ENCODE measurements at regions of chr7 and their contacts with region 1.

Region 1: GRCh38 chr7:78571292-78571691 is 772.7 kb downstream of the PHTF2 start:
- DNase-seq: no peak
- H3K4me3 ChIP-seq: no peak overlapping the region
- H3K27ac ChIP-seq: no peak overlapping the region
- H3K4me1 ChIP-seq: no peaks in the 10 kb centered on the region
- H3K27me3 ChIP-seq: no peaks in the 10 kb centered on the region
- CTCF ChIP-seq: no peak
- POLR2A ChIP-seq: no peak

Region 2: DNA sequence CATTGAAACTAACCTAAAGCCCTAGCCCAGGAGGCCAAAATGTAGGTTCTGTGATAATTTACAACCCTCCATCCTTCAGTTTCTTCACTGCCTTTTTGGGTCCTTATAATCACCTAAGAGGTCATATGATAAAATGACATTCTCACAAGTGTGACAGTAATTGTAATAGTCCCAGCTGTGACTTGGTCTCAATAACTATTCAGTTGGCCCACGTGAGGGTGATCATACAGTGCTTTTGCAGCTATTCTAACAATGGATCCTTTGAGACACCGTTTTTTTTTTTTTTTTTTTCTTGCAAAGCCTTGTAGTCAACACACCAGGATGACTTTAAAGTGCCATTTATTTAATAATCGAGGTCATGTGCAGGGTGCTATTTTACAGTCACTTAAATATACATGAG is 12.7 kb before region 1 on chr7:
- intact Hi-C with region 1: loop called (anchors 2 kb)
- DNase-seq: no peak
- H3K4me3 ChIP-seq: no peak overlapping the region
- H3K27ac ChIP-seq: no peak overlapping the region
- H3K4me1 ChIP-seq: no peaks in the 10 kb centered on the region
- H3K27me3 ChIP-seq: no peaks in the 10 kb centered on the region
- CTCF ChIP-seq: no peak
- POLR2A ChIP-seq: no peak